ENCODE measurements at regions of chr9 and their contacts with region 1.

Region 1: DNA sequence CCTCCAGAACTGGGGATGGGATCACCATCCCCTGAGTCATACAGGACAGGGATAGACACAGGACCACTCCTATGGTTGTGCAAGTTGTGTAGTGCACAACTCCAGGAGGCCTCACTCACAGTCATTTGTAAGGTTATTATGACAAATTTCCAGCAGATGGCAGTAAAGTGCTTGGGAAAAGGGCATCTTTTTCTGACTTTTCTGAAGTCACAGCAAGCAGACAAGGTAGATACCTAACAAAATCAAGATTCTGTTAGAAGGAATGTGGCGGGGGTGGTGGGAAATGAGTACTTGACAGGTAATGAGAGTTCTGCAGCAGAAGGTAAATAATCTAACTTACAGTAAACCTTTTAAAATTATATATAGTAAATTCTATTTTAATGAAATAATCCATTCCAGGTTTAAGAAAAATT is 16.7 kb upstream of the KIF27 start:
- DNase-seq: no peak
- H3K4me3 ChIP-seq: no peak overlapping the region
- H3K27ac ChIP-seq: no peak overlapping the region
- H3K4me1 ChIP-seq: no peaks in the 10 kb centered on the region
- H3K27me3 ChIP-seq: no peaks in the 10 kb centered on the region
- CTCF ChIP-seq: peak; percentile 37 to 70 (median 55)
- EP300 ChIP-seq: no peak
- POLR2A ChIP-seq: no peak

Region 2: DNA sequence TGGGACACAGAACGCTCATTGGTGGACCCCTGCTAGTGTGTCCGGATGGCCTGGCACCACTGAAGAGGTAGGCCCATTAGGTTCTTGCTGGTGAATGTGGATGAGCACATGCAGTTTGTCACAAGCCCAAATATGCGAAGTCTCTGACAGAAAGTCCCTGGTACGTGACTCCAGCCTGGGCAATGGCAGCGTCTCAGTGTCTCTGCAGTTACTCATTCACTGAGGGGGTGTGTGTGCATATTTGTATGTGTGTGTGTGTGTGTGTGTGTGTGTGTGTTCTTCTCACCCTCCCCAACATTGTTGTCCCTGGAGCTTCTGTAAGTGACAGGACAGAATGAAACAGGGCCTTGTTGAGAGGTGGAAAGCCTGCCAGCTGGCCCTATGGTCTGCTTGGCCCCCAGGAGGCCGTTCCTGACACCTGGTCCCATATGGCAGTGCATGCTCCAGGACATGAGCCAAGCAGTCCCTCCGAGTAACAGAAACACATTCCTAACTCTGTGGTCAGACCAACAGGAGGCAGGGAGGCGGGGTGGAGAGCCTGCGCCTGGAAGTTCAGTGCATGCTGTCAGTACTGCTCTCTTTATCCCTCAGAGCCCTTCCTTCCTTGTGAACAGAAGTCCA is 232.7 kb after region 1 on chr9:
- intact Hi-C with region 1: loop called in 2 of 4 experiments (anchors 10 kb)
- DNase-seq: peak; percentile 67 to 85 (median 76)
- H3K4me3 ChIP-seq: no peak overlapping the region
- H3K27ac ChIP-seq: no peak overlapping the region
- H3K4me1 ChIP-seq: peaks cover 8% of the 10 kb centered on the region
- H3K27me3 ChIP-seq: no peaks in the 10 kb centered on the region
- CTCF ChIP-seq: no peak
- EP300 ChIP-seq: no peak
- POLR2A ChIP-seq: no peak

Region 3: GRCh38 chr9:84254972-84255371 is 317.1 kb after region 1 on chr9:
- intact Hi-C with region 1: loop called (anchors 2 to 5 kb)
- DNase-seq: no peak
- H3K4me3 ChIP-seq: no peak overlapping the region
- H3K27ac ChIP-seq: no peak overlapping the region
- H3K4me1 ChIP-seq: no peaks in the 10 kb centered on the region
- H3K27me3 ChIP-seq: no peaks in the 10 kb centered on the region
- CTCF ChIP-seq: no peak
- EP300 ChIP-seq: no peak
- POLR2A ChIP-seq: no peak

Region 4: GRCh38 chr9:84261082-84261746 is 323.3 kb after region 1 on chr9:
- intact Hi-C with region 1: loop called (anchors 2 to 5 kb)
- DNase-seq: peak; percentile 62 to 84 (median 78)
- H3K4me3 ChIP-seq: no peak overlapping the region
- H3K27ac ChIP-seq: no peak overlapping the region
- H3K4me1 ChIP-seq: no peaks in the 10 kb centered on the region
- H3K27me3 ChIP-seq: no peaks in the 10 kb centered on the region
- CTCF ChIP-seq: peak; percentile 87
- EP300 ChIP-seq: no peak
- POLR2A ChIP-seq: no peak